Activated CD4-positive, alpha-beta memory T cell treated with anti-CD3 and anti-CD28 coated beads for 36 hours (primary cell): ENCODE measurements at regions of chr6 and their contacts with region 1.

Region 1: DNA sequence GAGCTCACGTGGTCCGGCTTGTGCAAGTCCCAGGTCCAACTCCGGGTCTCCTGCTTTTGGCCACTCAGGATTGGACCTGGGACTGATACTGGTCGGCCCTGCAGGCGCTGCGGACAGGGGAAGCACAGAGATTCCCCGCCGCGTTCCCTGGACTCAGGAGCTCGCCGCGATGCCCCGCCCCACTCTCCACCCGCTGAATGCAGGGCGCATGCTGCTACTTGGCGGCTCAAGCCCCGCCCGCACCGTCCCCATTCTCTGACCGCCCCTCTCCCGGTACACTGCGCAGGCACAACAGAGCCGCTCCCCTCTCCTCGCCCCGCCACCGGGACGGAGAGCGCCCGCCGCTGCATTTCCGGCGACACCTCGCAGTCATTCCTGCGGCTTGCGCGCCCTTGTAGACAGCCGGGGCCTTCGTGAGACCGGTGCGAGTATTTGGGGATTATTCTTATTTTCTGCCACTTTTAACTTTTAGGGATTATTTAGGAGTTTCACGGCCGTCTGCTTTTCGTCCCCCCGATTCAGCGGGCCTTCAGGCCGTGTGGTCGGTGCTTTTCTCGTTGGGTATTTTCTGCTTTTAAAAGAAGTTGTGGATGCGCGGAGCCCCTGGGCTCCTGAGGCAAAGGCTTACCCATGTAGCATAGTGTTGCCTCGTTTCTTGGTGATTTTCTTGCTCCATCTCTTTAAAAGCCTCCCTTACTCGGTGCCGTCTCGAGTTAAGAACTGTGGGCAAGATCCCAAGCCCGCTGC is at the start of gene TMEM14C:
- DNase-seq: peak; percentile 95
- H3K4me3 Mint-ChIP-seq: peak within 1 kb of the TSS; percentile 84
- H3K27ac Mint-ChIP-seq: peak within 1 kb of the TSS; percentile 82
- H3K4me1 Mint-ChIP-seq: peaks cover 34% of the 10 kb centered on the region
- H3K27me3 Mint-ChIP-seq: no peaks in the 10 kb centered on the region
- total RNA-seq, gene TMEM14C: 84.9 to 87.6 TPM

Region 2: GRCh38 chr6:10404107-10404798 is 318.7 kb before region 1 on chr6:
- CTCF ChIA-PET with region 1: no interaction called
- POLR2A ChIA-PET with region 1: no interaction called
- intact Hi-C with region 1: loop called (anchors 10 kb)
- DNase-seq: peak; percentile 93
- H3K4me3 Mint-ChIP-seq: peak overlapping the region; percentile 76
- H3K27ac Mint-ChIP-seq: peak overlapping the region; percentile 77
- H3K4me1 Mint-ChIP-seq: peaks cover 10% of the 10 kb centered on the region
- H3K27me3 Mint-ChIP-seq: peaks cover 50% of the 10 kb centered on the region

Region 3: DNA sequence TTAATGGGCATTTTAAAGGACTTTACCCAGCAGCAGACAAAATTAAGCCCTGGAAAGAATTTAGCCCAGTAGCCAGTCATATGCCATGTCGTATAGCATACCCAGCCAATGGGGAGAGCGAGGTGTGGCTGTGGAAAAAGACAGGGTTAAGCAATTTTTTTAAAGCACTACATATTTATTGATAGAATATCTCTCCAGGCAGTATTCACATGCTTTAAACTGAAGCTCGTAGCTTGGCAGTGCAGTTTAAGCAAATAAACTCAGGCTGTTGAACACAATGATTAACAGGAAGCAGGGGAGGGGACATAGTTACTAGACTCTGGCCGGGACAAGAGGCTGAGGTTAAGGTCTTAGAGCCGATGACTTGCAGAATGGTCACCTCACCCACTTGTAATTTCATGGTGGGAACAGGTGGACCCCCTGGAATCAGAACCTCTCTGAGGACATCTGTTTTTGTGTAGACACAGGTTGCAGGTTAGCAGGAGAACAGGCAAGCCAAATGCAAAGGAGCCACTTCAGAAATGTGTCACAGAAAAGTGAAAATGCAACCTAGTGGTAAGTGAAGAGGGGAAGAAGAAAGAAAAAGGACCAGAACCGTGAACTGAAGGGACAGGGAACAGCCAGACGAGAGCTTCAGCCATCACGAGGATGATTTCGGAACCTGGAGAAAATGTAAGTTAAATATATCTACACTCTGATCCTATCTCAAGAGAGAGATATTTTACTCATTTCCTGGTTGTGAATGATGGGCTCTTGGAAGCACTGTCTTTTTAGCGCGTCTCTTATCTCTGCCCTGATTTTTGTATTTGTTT is 194.6 kb before region 1 on chr6:
- CTCF ChIA-PET with region 1: no interaction called
- POLR2A ChIA-PET with region 1: interaction called, 4 read pairs
- intact Hi-C with region 1: loop called (anchors 2 kb)
- DNase-seq: peak; percentile 37
- H3K4me3 Mint-ChIP-seq: peak overlapping the region; percentile 73
- H3K27ac Mint-ChIP-seq: peak overlapping the region; percentile 61
- H3K4me1 Mint-ChIP-seq: peaks cover 47% of the 10 kb centered on the region
- H3K27me3 Mint-ChIP-seq: no peaks in the 10 kb centered on the region

Region 4: GRCh38 chr6:10747251-10747972 is 24.4 kb after region 1 on chr6 and contains the start of gene TMEM14B:
- CTCF ChIA-PET with region 1: interaction called, 5 read pairs
- POLR2A ChIA-PET with region 1: interaction called, 16 read pairs
- intact Hi-C with region 1: loop called (anchors 1 kb)
- DNase-seq: peak; percentile 100
- H3K4me3 Mint-ChIP-seq: peak within 1 kb of the TSS; percentile 88
- H3K27ac Mint-ChIP-seq: peak within 1 kb of the TSS; percentile 86
- H3K4me1 Mint-ChIP-seq: peaks cover 47% of the 10 kb centered on the region
- H3K27me3 Mint-ChIP-seq: no peaks in the 10 kb centered on the region
- total RNA-seq, gene TMEM14B: 86.9 to 91.3 TPM

Region 5: GRCh38 chr6:11537229-11538051 is 814.4 kb after region 1 on chr6 and contains the start of gene TMEM170B:
- CTCF ChIA-PET with region 1: no interaction called
- POLR2A ChIA-PET with region 1: no interaction called
- intact Hi-C with region 1: loop called (anchors 1 kb)
- DNase-seq: peak; percentile 94
- H3K4me3 Mint-ChIP-seq: peak within 1 kb of the TSS; percentile 73
- H3K27ac Mint-ChIP-seq: no peak within 1 kb of the TSS
- H3K4me1 Mint-ChIP-seq: peaks cover 9% of the 10 kb centered on the region
- H3K27me3 Mint-ChIP-seq: peaks cover 14% of the 10 kb centered on the region
- total RNA-seq, gene TMEM170B: 0.83 to 1.1 TPM